OCI-LY7 (cell line): ENCODE measurements at regions of chr7 and their contacts with region 1.

Region 1: DNA sequence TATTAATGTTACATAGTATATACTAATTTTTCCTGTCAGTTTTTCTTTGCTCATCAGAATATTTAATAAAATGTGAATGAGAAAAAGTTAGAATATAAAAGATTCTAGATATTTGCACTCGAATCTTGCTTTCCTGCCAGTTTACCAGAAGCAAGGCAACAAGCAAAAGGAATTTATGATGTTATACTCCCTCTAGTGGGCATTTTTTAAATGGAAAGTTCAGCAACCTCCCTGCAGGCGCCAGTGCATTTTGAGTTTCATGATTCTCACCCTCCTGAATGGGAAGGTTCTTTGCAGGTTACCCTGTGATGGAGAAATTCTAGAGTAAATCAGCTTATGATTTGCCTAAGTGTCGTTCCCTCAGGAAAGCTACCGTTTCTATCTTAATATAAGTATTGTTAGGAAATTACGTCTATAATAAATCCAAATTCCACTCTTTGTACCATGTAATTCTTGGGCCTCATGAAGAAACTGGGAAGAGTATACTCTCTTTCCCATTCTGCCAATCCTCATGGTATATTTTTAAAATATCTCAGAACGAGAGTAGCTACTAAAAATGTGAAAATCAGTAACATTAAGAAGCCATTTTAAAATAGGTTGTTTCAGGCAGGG is 350.0 kb downstream of the CRPPA start:
- DNase-seq: peak; percentile 61
- H3K4me3 ChIP-seq: no peak overlapping the region
- H3K27ac ChIP-seq: no peak overlapping the region
- H3K4me1 ChIP-seq: no peaks in the 10 kb centered on the region
- CTCF ChIP-seq: peak; percentile 85

Region 2: GRCh38 chr7:15199482-15199881 is 871.9 kb before region 1 on chr7:
- CTCF ChIA-PET with region 1: no interaction called
- POLR2A ChIA-PET with region 1: no interaction called
- intact Hi-C with region 1: loop called (anchors 5 kb)
- DNase-seq: no peak
- H3K4me3 ChIP-seq: no peak overlapping the region
- H3K27ac ChIP-seq: no peak overlapping the region
- H3K4me1 ChIP-seq: no peaks in the 10 kb centered on the region
- CTCF ChIP-seq: peak; percentile 70

Region 3: GRCh38 chr7:15326044-15326644 is 745.2 kb before region 1 on chr7:
- CTCF ChIA-PET with region 1: no interaction called
- POLR2A ChIA-PET with region 1: no interaction called
- intact Hi-C with region 1: loop called (anchors 5 kb)
- DNase-seq: peak; percentile 1
- H3K4me3 ChIP-seq: no peak overlapping the region
- H3K27ac ChIP-seq: no peak overlapping the region
- H3K4me1 ChIP-seq: no peaks in the 10 kb centered on the region
- CTCF ChIP-seq: peak; percentile 80

Region 4: DNA sequence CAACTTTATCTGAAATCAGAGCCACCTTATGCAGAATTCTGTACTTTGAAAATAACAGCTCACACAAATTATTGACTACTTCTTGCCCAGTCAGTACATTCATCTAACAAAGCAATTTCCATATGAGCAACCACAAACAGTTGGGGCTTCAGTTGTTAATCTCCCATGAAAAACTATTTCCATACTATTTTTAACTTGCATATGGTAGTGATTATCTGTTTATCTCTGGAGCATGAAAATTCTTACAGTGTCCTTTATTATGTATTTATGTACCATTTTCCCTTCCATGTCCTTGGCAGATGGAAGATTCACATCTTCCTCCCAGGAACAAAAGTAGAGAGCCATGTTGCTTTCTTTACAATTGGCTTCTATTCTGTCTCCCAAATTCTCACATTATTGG is 64.3 kb after region 1 on chr7:
- CTCF ChIA-PET with region 1: no interaction called
- POLR2A ChIA-PET with region 1: no interaction called
- intact Hi-C with region 1: no loop called
- DNase-seq: no peak
- H3K4me3 ChIP-seq: no peak overlapping the region
- H3K27ac ChIP-seq: no peak overlapping the region
- H3K4me1 ChIP-seq: no peaks in the 10 kb centered on the region
- CTCF ChIP-seq: no peak